A673 (cell line): ENCODE measurements at regions of chr1 and their contacts with region 1.

Region 1: DNA sequence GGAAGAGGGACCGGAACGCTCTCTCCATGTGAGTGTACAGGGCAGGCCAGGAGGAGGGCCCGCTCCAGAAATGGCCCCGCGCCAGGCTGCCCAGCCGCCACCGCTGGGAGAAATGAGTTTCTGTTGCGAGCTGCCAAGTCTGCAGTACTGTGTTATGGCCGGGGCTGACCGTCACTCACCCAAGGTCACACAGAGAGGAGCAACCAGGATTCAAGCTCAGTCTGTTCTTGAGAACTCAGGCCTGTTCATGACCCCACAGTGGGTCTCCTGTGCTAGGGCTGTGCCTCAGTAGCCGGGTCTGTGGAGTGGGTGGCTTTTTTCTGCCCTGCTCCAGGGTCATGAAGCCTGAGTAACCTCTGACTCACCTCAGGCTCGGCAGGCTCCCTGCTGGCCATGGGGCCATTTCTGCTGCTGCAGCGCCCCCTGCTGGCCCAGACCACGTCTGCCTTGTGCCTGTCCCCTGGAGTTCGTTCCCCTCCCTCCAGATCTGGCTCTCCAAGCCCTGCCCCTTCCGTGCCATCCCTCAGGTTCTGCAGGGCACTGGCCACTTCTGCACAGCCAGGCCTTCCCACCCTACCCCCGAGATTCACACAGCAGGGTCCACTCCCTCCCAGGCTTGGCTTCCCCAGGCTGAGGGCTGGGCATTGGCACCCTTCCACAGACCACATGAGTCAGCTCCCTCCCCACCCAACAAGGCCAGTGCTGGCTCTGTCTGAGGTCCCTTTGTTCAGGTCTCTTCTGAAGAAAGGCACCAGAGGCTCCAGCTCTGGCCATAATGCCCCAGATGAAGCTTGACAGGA is 51.8 kb downstream of the EDN2 start:
- DNase-seq: peak; percentile 65
- H3K4me3 ChIP-seq: no peak overlapping the region
- H3K27ac ChIP-seq: no peak overlapping the region
- H3K4me1 ChIP-seq: no peaks in the 10 kb centered on the region
- H3K27me3 ChIP-seq: no peaks in the 10 kb centered on the region
- CTCF ChIP-seq: peak; percentile 96

Region 2: DNA sequence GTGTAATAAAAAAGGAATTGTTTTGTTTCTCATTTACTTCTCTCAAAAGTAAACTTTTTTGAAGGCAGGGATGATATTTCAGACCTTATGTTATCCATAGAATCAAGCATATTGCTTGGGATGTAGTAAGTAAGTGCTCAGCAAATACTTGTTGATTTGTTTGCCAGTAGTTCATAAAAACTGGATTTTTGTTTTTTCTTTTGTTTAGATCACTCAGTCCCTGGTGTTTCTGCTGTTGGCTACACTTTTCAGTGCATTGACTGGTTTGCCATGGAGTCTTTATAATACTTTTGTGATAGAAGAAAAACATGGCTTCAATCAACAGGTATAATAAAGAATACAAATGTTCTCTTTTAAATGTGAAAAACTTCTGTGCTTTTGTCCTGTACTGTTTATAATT is 1164.5 kb before region 1 on chr1:
- CTCF ChIA-PET with region 1: no interaction called
- POLR2A ChIA-PET with region 1: interaction called, 13 read pairs
- intact Hi-C with region 1: no loop called
- DNase-seq: no peak
- H3K4me3 ChIP-seq: no peak overlapping the region
- H3K27ac ChIP-seq: no peak overlapping the region
- H3K4me1 ChIP-seq: no peaks in the 10 kb centered on the region
- H3K27me3 ChIP-seq: no peaks in the 10 kb centered on the region
- CTCF ChIP-seq: no peak

Region 3: DNA sequence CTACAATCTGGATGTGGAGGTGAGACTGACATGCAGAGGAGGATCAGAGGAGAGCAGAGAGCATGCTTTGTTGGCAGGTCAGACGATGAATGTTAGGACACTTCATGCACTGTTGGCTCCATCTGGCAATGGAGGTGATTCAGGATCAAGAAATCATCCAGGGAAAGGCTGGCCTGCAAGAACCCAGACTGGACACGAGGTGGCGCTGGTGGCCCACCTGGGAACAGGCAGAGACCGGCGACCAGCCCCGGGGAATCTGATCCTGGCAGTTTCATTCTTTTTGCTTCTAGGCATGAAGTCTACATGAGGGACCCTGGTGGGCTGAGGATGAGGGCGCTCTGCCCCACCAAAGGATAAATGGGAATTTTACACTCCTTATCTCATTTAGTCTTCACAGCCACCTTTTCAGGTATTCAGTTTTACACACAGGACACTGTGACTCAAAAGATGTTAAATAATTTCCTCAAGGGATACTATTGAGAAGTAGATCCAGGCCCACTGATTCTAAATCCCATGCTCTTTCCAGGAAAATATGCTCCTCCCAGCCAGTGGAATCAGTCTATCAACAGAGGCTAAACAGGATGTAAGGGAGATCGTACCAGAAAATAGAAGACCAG is 164.4 kb before region 1 on chr1:
- CTCF ChIA-PET with region 1: no interaction called
- POLR2A ChIA-PET with region 1: no interaction called
- intact Hi-C with region 1: loop called (anchors 1 kb)
- DNase-seq: peak; percentile 73
- H3K4me3 ChIP-seq: no peak overlapping the region
- H3K27ac ChIP-seq: no peak overlapping the region
- H3K4me1 ChIP-seq: no peaks in the 10 kb centered on the region
- H3K27me3 ChIP-seq: no peaks in the 10 kb centered on the region
- CTCF ChIP-seq: peak; percentile 94

Region 4: GRCh38 chr1:41282679-41283317 is 149.9 kb before region 1 on chr1:
- CTCF ChIA-PET with region 1: interaction called, 19 read pairs
- POLR2A ChIA-PET with region 1: no interaction called
- intact Hi-C with region 1: loop called (anchors 5 kb)
- DNase-seq: peak; percentile 56
- H3K4me3 ChIP-seq: no peak overlapping the region
- H3K27ac ChIP-seq: no peak overlapping the region
- H3K4me1 ChIP-seq: no peaks in the 10 kb centered on the region
- H3K27me3 ChIP-seq: no peaks in the 10 kb centered on the region
- CTCF ChIP-seq: peak; percentile 90

Region 5: GRCh38 chr1:41313661-41314131 is 119.0 kb before region 1 on chr1:
- CTCF ChIA-PET with region 1: interaction called, 10 read pairs
- POLR2A ChIA-PET with region 1: no interaction called
- intact Hi-C with region 1: loop called (anchors 5 kb)
- DNase-seq: peak; percentile 70
- H3K4me3 ChIP-seq: no peak overlapping the region
- H3K27ac ChIP-seq: no peak overlapping the region
- H3K4me1 ChIP-seq: no peaks in the 10 kb centered on the region
- H3K27me3 ChIP-seq: no peaks in the 10 kb centered on the region
- CTCF ChIP-seq: peak; percentile 81